Activated T-helper 1 cell treated with anti-CD3 and anti-CD28 coated beads, Interleukin-12 subunit alpha, Interleukin-12 subunit beta, Interleukin-2, Interleukin-4 antibody, amounts not matched to agents 30 ng/mL and 10 ng/mL and 1 ng/mL, durations not matched to agents 14 hours and 24 hours and 36 hours (primary cell): ENCODE measurements at regions of chr16 and their contacts with region 1.

Region 1: DNA sequence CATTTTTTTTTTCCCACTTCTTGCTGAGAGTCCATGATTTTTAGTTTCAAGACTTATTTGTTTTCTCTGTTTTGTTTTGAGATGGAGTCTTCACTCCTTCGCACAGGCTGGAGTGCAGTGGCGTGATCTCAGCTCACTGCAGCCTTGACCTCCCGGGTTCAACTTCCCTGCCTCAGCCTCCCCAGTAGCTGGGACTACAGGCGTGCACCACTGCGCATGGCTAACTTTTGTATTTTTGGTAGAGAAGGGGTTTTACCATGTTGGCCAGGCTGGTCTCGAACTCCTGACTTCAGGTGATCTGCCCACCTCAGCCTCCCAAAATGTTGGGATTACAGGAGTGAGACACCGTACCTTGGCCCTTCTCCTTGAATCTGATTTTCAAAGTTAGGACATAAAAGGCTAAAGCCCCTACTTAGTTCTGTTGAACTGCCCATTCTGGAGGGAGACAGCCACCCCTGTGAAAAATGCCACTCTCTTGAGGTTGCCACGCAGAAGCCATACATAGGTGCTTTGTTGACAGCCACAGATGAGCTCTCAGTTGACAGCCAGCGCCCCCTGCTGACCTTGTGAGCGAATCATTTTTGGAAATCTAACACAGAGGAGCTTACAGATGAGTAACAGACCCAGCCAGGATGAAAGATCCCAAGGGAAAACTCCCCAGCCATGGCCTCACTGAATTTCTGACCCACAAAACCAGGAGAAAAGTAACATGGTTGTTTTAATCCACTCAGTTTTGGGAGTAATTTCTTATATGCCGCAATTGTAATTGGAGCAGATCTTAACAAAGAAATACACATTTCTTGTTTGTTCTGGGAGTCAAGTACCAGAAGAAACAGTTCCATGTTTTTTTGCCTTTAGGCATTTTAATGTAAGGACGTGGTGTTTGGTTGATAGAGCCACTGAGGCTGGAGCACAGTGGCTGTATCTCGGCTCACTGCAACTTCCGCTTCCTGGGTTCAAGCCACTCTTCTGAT is 38.8 kb downstream of the PKD1L3 start:
- DNase-seq: peak; percentile 70
- H3K4me3 Mint-ChIP-seq: no peak overlapping the region
- H3K27ac Mint-ChIP-seq: no peak overlapping the region
- H3K4me1 Mint-ChIP-seq: peaks cover 9% of the 10 kb centered on the region
- H3K27me3 Mint-ChIP-seq: peaks cover 4% of the 10 kb centered on the region

Region 2: DNA sequence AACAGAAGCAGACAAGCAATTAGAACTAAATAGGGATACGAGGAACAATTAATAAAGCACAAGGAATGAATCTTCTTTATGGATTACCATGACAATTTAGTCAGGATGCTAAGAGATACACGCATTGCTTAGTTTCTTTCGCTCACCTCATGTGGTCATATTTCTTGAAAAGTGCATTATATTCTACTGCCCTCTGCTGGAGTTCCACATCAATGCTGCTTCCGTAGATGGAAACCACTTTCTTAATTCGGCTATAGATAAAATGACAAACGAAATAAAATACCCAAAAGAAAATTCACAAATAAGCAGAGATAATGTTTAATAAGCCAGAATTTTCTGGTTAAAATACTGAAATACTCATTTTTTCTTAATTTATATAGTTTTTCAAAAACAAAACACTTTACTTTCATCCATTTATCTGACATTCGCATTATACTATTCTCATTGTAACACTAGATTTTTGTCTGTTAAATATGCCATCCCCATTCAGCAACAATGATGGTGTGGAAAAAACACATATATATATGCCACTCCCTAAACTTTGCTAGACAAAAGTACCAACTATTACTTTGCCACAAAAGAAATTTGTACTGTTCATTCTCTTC is 214.8 kb before region 1 on chr16:
- intact Hi-C with region 1: loop called (anchors 1 kb)
- DNase-seq: no peak
- H3K4me3 Mint-ChIP-seq: no peak overlapping the region
- H3K27ac Mint-ChIP-seq: no peak overlapping the region
- H3K4me1 Mint-ChIP-seq: peaks cover 5% of the 10 kb centered on the region
- H3K27me3 Mint-ChIP-seq: no peaks in the 10 kb centered on the region

Region 3: GRCh38 chr16:71767060-71767900 is 194.1 kb before region 1 on chr16:
- intact Hi-C with region 1: loop called (anchors 5 kb)
- DNase-seq: no peak
- H3K4me3 Mint-ChIP-seq: no peak overlapping the region
- H3K27ac Mint-ChIP-seq: peak overlapping the region; percentile 31
- H3K4me1 Mint-ChIP-seq: peaks cover 16% of the 10 kb centered on the region
- H3K27me3 Mint-ChIP-seq: no peaks in the 10 kb centered on the region

Region 4: DNA sequence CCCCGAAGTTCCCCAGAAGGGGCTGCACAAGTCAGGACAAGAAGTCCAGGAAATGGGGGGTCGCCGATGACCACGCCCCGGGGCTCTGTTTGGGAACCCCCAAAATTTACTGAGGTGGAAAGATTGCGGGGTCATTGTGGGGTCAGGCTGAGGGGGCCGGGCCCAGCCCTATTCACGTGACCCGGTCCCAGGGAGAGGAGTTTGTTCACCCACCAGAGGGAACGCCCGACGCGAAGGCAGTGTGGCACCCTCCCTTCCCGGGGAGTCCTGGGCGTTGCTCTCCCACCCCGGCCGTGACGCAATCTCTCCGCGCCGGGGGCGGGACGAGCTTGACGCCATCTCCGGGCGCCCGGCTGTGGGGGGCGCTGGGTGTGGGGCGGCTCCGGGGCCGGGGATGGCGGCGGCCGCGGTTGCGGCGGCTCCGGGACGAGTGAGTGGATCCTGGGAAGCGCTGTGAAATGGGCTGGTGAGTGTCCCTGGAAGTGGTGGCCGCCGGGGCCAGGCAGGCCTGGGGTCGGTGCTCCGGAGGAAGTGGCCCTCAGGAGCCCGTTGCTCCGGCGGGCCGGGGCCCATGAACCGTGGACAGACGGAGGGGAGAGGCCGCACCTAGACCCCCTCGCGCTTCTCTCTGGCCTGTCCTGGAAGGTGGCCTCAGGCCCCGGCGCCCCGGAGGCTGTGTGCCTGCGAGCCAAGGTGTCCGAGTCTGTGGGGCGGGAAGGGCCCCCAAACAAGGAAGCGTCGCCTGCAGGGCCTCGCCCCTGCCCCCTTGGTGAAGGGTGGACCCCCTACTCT is 115.5 kb before region 1 on chr16 and contains the start of gene ATXN1L:
- intact Hi-C with region 1: loop called (anchors 1 kb)
- DNase-seq: peak; percentile 94
- H3K4me3 Mint-ChIP-seq: peak within 1 kb of the TSS; percentile 93
- H3K27ac Mint-ChIP-seq: peak within 1 kb of the TSS; percentile 94
- H3K4me1 Mint-ChIP-seq: peaks cover 52% of the 10 kb centered on the region
- H3K27me3 Mint-ChIP-seq: no peaks in the 10 kb centered on the region
- total RNA-seq, gene ATXN1L: 20.1 and 20.6 TPM in 2 replicates

Region 5: DNA sequence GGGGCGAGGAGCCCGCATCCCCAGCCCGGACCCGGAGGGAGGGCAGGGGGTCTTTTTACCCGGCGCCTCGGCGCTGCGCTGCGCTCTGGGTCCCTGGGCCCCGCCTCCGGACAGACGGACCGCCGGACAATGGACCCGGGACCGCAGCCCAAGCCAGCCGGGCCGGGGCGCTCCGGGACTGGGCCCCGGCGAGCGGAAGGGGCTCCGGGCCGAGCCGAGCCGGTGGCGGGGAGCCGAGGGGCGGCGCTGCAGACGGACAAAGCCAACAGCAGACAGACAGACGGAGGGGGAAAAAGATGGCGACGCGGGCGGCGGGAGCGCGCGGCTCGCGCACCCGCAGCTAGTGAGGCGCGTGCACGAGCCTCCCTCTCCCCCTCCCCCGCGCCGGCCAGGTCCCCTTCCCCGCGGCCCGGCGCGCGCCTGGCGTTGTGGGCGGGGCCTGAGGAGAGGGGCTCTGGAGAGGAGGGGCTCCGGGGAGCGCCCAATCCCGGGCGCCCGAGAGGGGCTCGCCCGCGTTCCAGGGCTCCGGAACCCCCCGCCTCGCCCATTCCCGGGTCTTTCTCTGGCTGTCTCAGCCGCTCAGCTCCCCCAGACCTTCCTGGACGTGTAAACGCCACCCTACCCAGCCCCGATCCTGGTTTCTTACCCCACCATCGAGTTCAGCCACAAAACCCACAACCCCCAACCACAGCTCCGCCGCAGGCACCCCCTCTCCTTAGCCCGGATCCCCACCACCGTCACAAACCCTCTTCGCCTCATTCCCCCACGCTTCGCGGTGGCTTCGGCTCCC is 77.3 kb before region 1 on chr16 and contains the start of gene ZNF821:
- intact Hi-C with region 1: loop called (anchors 1 kb)
- DNase-seq: peak; percentile 61
- H3K4me3 Mint-ChIP-seq: peak within 1 kb of the TSS; percentile 96
- H3K27ac Mint-ChIP-seq: peak within 1 kb of the TSS; percentile 94
- H3K4me1 Mint-ChIP-seq: peaks cover 54% of the 10 kb centered on the region
- H3K27me3 Mint-ChIP-seq: peaks cover 16% of the 10 kb centered on the region
- total RNA-seq, gene ZNF821: 6.4 and 7.4 TPM in 2 replicates

Region 6: GRCh38 chr16:71903608-71904007 is 57.7 kb before region 1 on chr16:
- intact Hi-C with region 1: no loop called
- DNase-seq: no peak
- H3K4me3 Mint-ChIP-seq: no peak overlapping the region
- H3K27ac Mint-ChIP-seq: peak overlapping the region; percentile 62
- H3K4me1 Mint-ChIP-seq: peaks cover 30% of the 10 kb centered on the region
- H3K27me3 Mint-ChIP-seq: no peaks in the 10 kb centered on the region

Region 7: GRCh38 chr16:72389791-72390190 is 428.4 kb after region 1 on chr16:
- intact Hi-C with region 1: no loop called
- DNase-seq: no peak
- H3K4me3 Mint-ChIP-seq: no peak overlapping the region
- H3K27ac Mint-ChIP-seq: no peak overlapping the region
- H3K4me1 Mint-ChIP-seq: no peaks in the 10 kb centered on the region
- H3K27me3 Mint-ChIP-seq: peaks cover 2% of the 10 kb centered on the region